Lower leg skin (tissue), 4 donors: ENCODE measurements at regions of chr14 and their contacts with region 1.

Region 1: GRCh38 chr14:28113311-28113710 is 653.3 kb upstream of the FOXG1 start:
- DNase-seq: no peak
- H3K4me3 ChIP-seq: no peak overlapping the region
- CTCF ChIP-seq: no peak
- POLR2A ChIP-seq: no peak

Region 2: DNA sequence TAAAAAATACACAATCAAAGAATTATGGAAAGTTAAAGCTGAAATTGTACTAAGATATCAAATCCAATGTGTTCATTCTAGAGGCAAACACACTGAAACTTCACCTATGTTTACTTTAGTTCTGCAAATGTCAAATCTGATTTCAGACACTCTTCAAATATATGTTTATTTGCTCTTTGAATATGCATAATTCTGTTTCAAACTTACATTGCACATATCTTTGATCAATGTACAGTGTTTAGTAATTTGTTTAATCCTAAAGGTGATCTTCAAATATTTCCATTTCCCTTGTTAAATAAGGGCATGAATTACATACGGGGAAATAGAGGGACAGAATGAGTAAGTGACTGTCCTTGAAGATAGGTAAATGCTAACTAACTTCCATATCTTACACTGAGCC is 910.1 kb before region 1 on chr14:
- intact Hi-C with region 1: loop called (anchors 5 kb)
- DNase-seq: no peak
- H3K4me3 ChIP-seq: no peak overlapping the region
- CTCF ChIP-seq: no peak
- POLR2A ChIP-seq: no peak

Region 3: DNA sequence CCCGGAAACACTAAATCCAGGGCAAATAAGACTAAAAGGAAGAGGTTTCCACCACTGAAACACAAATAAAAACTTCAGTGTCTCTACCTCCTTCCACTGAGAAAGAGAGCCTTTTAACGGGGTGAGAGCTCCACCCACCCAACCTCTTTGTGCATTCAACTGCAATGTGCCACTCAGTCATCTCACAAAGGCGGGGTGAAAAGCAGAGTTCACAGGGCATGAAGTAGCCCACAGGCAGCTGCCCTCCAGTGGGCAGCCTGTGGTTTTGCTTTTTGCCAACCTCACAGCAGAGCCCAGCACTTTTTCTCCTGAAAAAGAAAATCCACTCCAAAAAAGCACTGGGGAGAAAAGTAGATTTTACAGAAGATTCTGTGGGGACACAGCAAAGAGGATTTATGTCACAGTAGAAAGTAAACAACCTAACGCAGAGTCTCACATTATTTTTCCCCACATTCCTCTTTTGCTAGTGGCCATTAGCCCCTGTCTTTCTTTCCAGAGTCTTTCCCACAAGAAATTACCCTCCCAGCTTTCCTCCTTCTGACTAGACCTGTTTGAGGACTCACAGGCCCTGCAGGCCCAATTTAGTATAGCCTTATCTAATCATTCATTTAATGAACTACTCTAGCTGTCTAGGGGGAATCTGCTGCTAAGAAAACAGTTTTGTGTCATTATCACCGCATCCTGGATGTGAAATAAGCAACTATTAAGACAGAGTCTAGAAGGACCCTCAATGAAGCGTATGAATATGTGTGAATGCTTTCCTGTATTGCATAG is 100.5 kb before region 1 on chr14:
- intact Hi-C with region 1: no loop called
- DNase-seq: no peak
- H3K4me3 ChIP-seq: no peak overlapping the region
- CTCF ChIP-seq: no peak
- POLR2A ChIP-seq: no peak